Activated B cell treated with CpG ODN at 0.5 μM for 24 hours (primary cell): ENCODE measurements at regions of chr2 and their contacts with region 1.

Region 1: DNA sequence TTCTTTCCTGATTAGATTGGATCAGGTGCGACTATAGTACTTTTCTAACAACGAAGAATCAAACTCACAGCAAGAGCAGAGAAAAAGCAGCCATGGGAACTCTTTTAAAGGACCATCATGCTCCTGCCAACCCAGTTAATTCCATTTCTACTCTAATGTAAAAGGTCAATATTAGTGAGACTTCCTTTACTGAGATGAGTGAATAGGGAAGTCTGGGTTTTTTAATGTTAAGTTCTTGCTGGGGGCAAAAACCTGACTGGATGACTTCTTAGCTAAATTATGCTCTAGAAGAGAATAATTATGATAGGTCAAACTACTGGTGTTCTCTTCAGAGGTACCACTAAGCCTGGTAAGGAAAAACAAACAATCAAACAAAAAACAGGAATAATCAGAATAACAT is 8.4 kb downstream of the SRBD1 start:
- DNase-seq: no peak
- ATAC-seq: no peak
- H3K4me3 Mint-ChIP-seq: no peak overlapping the region
- H3K27ac Mint-ChIP-seq: peak overlapping the region; percentile 32
- H3K4me1 Mint-ChIP-seq: peaks cover 14% of the 10 kb centered on the region
- H3K27me3 Mint-ChIP-seq: no peaks in the 10 kb centered on the region
- CTCF ChIP-seq: no peak

Region 2: DNA sequence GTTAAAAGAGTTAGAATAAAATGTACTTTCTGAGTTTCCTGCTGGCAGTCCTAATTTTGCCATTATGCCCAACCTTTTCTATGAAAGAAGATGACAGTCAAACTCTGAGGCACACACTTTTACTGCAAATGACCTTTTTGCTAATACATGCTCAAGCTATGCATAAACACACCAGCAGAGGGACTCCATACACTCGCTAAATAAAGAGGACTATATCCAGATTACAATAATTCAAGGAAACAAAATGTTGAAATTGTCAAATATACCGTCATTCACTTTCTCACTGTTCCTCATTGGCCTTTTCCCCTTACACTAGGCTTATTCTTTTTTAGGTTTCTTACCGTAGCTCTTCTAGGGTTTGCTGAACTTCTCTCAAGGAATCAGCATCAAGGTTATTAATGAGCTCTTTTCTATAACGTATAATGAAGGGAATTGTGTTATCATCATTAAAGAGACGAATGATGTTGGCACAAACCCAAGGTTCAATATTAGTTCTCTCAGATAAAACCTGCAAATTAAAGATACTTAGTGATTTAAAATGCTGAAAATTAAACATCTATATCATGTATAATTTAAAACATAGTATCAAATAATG is 17.3 kb before region 1 on chr2:
- CTCF ChIA-PET with region 1: interaction called, 4 read pairs
- POLR2A ChIA-PET with region 1: no interaction called
- intact Hi-C with region 1: loop called (anchors 2 kb)
- DNase-seq: no peak
- ATAC-seq: peak; percentile 52
- H3K4me3 Mint-ChIP-seq: no peak overlapping the region
- H3K27ac Mint-ChIP-seq: no peak overlapping the region
- H3K4me1 Mint-ChIP-seq: peaks cover 13% of the 10 kb centered on the region
- H3K27me3 Mint-ChIP-seq: no peaks in the 10 kb centered on the region
- CTCF ChIP-seq: peak; percentile 48

Region 3: DNA sequence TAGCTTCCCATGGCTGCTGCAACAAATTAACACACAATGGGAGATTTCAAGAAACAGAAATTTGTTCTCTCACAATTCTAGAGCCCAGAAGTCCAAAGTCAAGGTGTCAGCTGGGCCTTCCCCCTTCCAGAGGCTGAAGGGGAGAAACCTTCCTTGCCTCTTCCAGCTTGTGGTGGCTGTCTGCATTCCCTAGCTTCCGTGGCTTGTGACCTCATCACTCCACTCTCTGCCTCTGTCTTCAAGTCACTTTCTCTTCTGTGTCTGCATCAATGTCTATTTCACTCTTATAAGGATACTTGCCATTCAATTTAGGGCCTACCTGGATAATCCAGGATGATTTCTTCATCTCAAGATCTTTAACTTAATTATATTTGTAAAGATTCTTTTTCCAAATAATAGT is 25.3 kb after region 1 on chr2:
- CTCF ChIA-PET with region 1: no interaction called
- POLR2A ChIA-PET with region 1: no interaction called
- intact Hi-C with region 1: no loop called
- DNase-seq: no peak
- ATAC-seq: no peak
- H3K4me3 Mint-ChIP-seq: no peak overlapping the region
- H3K27ac Mint-ChIP-seq: no peak overlapping the region
- H3K4me1 Mint-ChIP-seq: no peaks in the 10 kb centered on the region
- H3K27me3 Mint-ChIP-seq: peaks cover 33% of the 10 kb centered on the region
- CTCF ChIP-seq: no peak